ENCODE measurements at regions of chr3 and their contacts with region 1.

Region 1: DNA sequence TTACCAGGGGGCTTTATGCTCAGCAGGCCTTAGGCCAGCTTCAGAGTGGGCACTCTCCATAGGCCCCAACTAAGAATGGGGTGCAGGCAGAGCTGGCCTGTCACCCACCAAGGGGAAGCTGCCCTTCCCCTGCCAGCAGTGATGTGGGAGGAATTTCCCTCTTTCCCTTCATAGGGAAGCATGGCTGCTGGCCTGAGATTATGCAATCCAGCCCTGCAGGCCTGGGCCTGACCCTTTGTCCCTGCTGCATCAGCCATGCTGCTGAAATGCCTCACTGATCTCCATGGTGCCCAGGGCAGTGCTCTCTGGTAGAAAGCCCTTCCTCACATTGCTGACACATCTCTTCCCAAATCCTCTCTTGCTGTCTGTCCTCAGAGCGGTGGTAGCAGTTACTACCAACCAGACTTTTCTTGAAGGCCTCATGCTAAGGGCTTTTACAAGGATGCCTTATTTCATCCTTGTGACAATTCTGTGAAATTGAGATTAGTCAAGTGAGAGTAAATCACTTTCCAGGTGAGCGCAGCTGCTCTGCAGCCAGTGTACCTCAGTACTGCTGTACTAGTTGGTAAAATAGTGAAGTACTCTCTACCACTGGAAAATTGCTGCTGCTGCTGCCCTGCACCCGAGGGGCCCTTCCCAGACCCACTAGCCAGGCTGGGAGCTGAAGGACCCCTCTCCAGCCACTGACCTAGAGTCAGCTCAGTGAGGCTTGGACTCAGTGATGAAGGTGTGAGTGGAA is 33.7 kb downstream of the MRAS start:
- DNase-seq: peak; percentile 55 to 82
- ATAC-seq: peak; percentile 80 to 90
- H3K4me3 ChIP-seq: no peak overlapping the region
- H3K27ac ChIP-seq: peak overlapping the region; percentile 68 to 86 (median 80)
- H3K4me1 ChIP-seq: peaks cover 59 to 67% of the 10 kb centered on the region in 2 donors
- H3K27me3 ChIP-seq: no peaks in the 10 kb centered on the region
- CTCF ChIP-seq: no peak
- POLR2A ChIP-seq: no peak

Region 2: DNA sequence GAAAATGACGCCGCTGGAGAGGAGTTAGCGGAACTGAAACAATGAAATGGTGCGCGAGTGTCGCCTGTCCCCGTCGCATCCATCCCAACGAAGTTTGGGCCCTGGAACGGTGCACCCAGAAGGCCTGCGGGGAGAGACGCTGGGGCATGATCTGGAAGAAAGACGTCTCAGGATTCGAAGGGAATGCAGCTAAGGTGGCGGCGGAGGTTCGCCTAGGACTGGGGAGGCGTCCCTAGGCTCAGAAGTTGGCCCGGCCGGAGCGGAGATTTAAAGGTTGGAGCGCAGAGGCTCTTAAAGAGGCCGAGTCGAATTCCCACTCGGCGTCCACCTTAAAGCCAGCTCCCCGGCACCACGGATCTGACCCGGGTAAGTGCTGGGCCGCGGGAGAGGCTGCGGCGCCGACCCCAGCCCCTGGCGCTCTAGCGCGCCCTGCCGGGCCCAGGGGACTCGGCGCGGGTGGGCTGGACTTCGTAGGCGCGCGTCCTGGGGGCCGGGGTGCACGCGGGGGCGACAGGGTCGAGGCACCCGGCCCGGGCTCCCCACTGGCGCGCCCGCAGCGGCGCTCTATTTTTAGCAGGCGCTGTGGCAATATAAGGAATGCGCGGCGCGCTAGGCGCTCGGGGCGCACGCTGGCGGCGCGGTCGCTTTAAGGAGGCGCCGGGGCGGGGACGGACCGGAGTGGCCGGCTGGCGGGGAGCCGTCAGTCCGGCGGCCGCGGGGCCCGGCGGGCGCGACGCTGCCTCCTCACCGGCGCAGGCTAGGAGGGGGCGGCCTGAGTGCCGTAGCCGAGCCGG is 34.0 kb before region 1 on chr3 and contains the start of gene MRAS:
- in situ Hi-C with region 1: no loop called
- intact Hi-C with region 1: loop called (anchors 5 kb)
- DNase-seq: peak; percentile 73 to 88
- ATAC-seq: peak; percentile 57 to 76
- H3K4me3 ChIP-seq: peak within 1 kb of the TSS; percentile 63 to 87 (median 74)
- H3K27ac ChIP-seq: peak within 1 kb of the TSS; percentile 93 to 98 (median 97)
- H3K4me1 ChIP-seq: peaks cover 37 to 41% of the 10 kb centered on the region in 2 donors
- H3K27me3 ChIP-seq: no peaks in the 10 kb centered on the region
- CTCF ChIP-seq: peak; percentile 21 to 65 (median 51)
- POLR2A ChIP-seq: peak; percentile 94 to 98
- total RNA-seq, gene MRAS: 45.8 to 149 (median 57.7) TPM